ENCODE measurements at regions of chr6 and their contacts with region 1.

Region 1: GRCh38 chr6:144149891-144150709 is at the start of gene STX11:
- DNase-seq: peak; percentile 95
- H3K4me3 Mint-ChIP-seq: peak within 1 kb of the TSS; percentile 89
- H3K27ac Mint-ChIP-seq: peak within 1 kb of the TSS; percentile 96
- H3K4me1 Mint-ChIP-seq: peaks cover 41% of the 10 kb centered on the region
- H3K27me3 Mint-ChIP-seq: no peaks in the 10 kb centered on the region
- total RNA-seq, gene STX11: 15.5 and 15.6 TPM in 2 replicates

Region 2: DNA sequence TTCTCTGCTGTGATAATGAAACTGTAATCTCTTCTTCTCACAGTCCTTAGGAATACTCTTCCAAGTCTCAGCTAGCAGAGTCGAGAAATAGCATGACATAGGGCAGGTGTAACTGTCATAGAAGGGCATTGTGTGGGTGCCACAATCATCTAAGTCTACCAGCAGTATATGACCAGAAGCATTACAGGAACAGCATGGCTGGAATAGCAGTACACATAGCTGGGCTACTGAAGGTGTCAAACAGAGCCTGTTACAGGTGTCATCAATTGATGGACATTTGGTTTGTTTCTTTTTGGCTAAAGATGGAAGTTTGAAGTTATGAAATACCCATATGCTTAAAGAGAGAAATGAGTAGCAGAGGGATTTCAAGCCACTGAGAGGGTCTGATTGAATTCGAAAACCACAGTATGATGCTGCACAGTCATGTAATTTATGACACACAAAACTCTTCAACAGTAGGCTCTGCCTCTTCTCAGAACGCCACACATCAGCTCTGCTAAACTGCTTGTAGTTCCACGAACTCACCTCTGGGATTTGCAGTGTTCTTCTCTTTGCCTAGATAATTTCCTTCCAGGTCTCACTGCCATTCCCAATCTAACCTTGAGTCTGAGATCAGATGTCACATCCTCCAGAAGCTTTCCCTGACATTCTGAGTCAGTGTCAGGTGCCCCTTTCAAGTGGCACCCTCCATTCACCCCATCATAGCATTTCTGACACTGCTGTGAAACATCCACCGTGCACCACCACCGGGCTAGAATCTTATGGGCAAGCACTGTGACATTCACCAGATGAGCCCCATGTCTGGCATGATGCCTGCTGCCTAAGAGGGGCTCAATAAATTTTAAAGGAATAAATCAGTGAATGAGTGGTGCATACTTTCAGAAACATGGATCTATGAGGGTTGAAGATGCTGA is 850.6 kb before region 1 on chr6:
- intact Hi-C with region 1: no loop called
- DNase-seq: no peak
- H3K4me3 Mint-ChIP-seq: no peak overlapping the region
- H3K27ac Mint-ChIP-seq: no peak overlapping the region
- H3K4me1 Mint-ChIP-seq: no peaks in the 10 kb centered on the region
- H3K27me3 Mint-ChIP-seq: no peaks in the 10 kb centered on the region

Region 3: DNA sequence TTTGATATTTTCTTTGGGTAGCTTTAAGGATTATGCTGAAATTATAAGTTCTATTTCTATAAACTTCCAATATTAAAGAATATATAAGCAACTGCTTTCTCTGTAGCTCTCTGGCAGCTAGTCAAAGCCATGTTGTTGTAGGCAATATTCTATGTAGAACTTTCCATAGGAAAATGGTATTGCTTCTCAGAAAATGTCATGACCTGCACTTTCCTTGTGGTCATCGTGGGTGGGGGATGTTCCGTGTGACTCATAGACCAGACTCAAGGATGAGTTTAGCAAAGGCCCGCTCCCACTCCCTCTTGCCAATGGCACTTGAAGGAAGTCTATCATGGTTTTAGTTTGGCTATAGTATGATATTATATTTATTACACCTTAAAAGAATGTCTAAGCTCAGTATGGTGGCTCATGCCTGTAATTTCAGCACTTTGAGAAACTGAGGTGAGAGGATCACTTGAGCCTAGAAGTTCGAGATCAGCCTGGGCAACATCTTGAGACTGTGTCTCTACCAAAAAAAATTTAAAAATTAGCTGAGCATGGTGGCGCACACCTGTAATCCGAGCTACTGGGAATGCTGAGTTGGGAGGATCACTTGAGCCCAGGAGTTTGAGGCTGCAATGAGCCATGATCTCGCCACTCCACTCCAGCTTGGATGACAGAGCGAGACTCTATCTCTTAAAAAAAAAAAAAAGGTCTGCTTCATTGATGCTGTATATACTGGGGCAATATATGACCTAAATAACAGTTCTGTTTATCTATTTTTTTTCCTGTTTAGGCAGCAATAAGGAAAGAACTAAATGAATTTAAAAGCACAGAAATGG is 343.6 kb before region 1 on chr6:
- intact Hi-C with region 1: loop called (anchors 10 kb)
- DNase-seq: peak; percentile 84
- H3K4me3 Mint-ChIP-seq: peak overlapping the region; percentile 62
- H3K27ac Mint-ChIP-seq: peak overlapping the region; percentile 91
- H3K4me1 Mint-ChIP-seq: peaks cover 46% of the 10 kb centered on the region
- H3K27me3 Mint-ChIP-seq: peaks cover 2% of the 10 kb centered on the region

Region 4: GRCh38 chr6:144063744-144064401 is 86.2 kb before region 1 on chr6:
- intact Hi-C with region 1: loop called (anchors 1 kb)
- DNase-seq: peak; percentile 97
- H3K4me3 Mint-ChIP-seq: peak overlapping the region; percentile 92
- H3K27ac Mint-ChIP-seq: peak overlapping the region; percentile 91
- H3K4me1 Mint-ChIP-seq: peaks cover 41% of the 10 kb centered on the region
- H3K27me3 Mint-ChIP-seq: no peaks in the 10 kb centered on the region

Region 5: GRCh38 chr6:144131248-144131709 is 18.8 kb before region 1 on chr6:
- intact Hi-C with region 1: loop called (anchors 1 kb)
- DNase-seq: no peak
- H3K4me3 Mint-ChIP-seq: peak overlapping the region; percentile 57
- H3K27ac Mint-ChIP-seq: peak overlapping the region; percentile 91
- H3K4me1 Mint-ChIP-seq: peaks cover 19% of the 10 kb centered on the region
- H3K27me3 Mint-ChIP-seq: no peaks in the 10 kb centered on the region

Region 6: GRCh38 chr6:144190593-144190992 is 40.5 kb after region 1 on chr6:
- intact Hi-C with region 1: no loop called
- DNase-seq: no peak
- H3K4me3 Mint-ChIP-seq: no peak overlapping the region
- H3K27ac Mint-ChIP-seq: no peak overlapping the region
- H3K4me1 Mint-ChIP-seq: no peaks in the 10 kb centered on the region
- H3K27me3 Mint-ChIP-seq: no peaks in the 10 kb centered on the region

Region 7: GRCh38 chr6:144215932-144216667 is 66.0 kb after region 1 on chr6:
- intact Hi-C with region 1: loop called (anchors 1 kb)
- DNase-seq: peak; percentile 97
- H3K4me3 Mint-ChIP-seq: peak overlapping the region; percentile 93
- H3K27ac Mint-ChIP-seq: peak overlapping the region; percentile 98
- H3K4me1 Mint-ChIP-seq: peaks cover 34% of the 10 kb centered on the region
- H3K27me3 Mint-ChIP-seq: peaks cover 9% of the 10 kb centered on the region

Region 8: GRCh38 chr6:144343701-144344428 is 193.8 kb after region 1 on chr6:
- intact Hi-C with region 1: loop called (anchors 1 kb)
- DNase-seq: peak; percentile 84
- H3K4me3 Mint-ChIP-seq: peak overlapping the region; percentile 89
- H3K27ac Mint-ChIP-seq: peak overlapping the region; percentile 96
- H3K4me1 Mint-ChIP-seq: peaks cover 59% of the 10 kb centered on the region
- H3K27me3 Mint-ChIP-seq: no peaks in the 10 kb centered on the region

Region 9: GRCh38 chr6:144710237-144710636 is 560.1 kb after region 1 on chr6:
- intact Hi-C with region 1: no loop called
- DNase-seq: no peak
- H3K4me3 Mint-ChIP-seq: no peak overlapping the region
- H3K27ac Mint-ChIP-seq: no peak overlapping the region
- H3K4me1 Mint-ChIP-seq: peaks cover 2% of the 10 kb centered on the region
- H3K27me3 Mint-ChIP-seq: no peaks in the 10 kb centered on the region

Measured in activated CD4-positive, alpha-beta T cell treated with anti-CD3 and anti-CD28 coated beads, Interleukin-2, amount 10 ng/mL, durations not matched to agents 24 days and 14 days (primary cell).